ENCODE measurements at regions of chrX and their contacts with region 1.

Region 1: GRCh38 chrX:56802921-56803849 is 74.1 kb downstream of the NBDY start:
- DNase-seq: peak; percentile 71
- H3K4me3 Mint-ChIP-seq: peak overlapping the region; percentile 32
- H3K27ac Mint-ChIP-seq: no peak overlapping the region
- H3K4me1 Mint-ChIP-seq: peaks cover 45% of the 10 kb centered on the region
- H3K27me3 Mint-ChIP-seq: no peaks in the 10 kb centered on the region

Region 2: GRCh38 chrX:56764153-56764974 is 38.8 kb before region 1 on chrX:
- CTCF ChIA-PET with region 1: interaction called, 3 read pairs
- intact Hi-C with region 1: loop called (anchors 1 kb)
- DNase-seq: peak; percentile 84
- H3K4me3 Mint-ChIP-seq: peak overlapping the region; percentile 66
- H3K27ac Mint-ChIP-seq: peak overlapping the region; percentile 96
- H3K4me1 Mint-ChIP-seq: peaks cover 54% of the 10 kb centered on the region
- H3K27me3 Mint-ChIP-seq: no peaks in the 10 kb centered on the region